Activated T-helper 1 cell treated with anti-CD3 and anti-CD28 coated beads, Interleukin-12 subunit alpha, Interleukin-12 subunit beta, Interleukin-2, Interleukin-4 antibody, amounts not matched to agents 30 ng/mL and 10 ng/mL and 1 ng/mL, durations not matched to agents 14 hours and 24 hours and 36 hours (primary cell): ENCODE measurements at regions of chr14 and their contacts with region 1.

Region 1: GRCh38 chr14:93975791-93976476 is 436 bp downstream of the ASB2 start:
- DNase-seq: peak; percentile 50
- H3K4me3 Mint-ChIP-seq: peak overlapping the region; percentile 76
- H3K27ac Mint-ChIP-seq: peak overlapping the region; percentile 99
- H3K4me1 Mint-ChIP-seq: peaks cover 96% of the 10 kb centered on the region
- H3K27me3 Mint-ChIP-seq: peaks cover 2% of the 10 kb centered on the region

Region 2: DNA sequence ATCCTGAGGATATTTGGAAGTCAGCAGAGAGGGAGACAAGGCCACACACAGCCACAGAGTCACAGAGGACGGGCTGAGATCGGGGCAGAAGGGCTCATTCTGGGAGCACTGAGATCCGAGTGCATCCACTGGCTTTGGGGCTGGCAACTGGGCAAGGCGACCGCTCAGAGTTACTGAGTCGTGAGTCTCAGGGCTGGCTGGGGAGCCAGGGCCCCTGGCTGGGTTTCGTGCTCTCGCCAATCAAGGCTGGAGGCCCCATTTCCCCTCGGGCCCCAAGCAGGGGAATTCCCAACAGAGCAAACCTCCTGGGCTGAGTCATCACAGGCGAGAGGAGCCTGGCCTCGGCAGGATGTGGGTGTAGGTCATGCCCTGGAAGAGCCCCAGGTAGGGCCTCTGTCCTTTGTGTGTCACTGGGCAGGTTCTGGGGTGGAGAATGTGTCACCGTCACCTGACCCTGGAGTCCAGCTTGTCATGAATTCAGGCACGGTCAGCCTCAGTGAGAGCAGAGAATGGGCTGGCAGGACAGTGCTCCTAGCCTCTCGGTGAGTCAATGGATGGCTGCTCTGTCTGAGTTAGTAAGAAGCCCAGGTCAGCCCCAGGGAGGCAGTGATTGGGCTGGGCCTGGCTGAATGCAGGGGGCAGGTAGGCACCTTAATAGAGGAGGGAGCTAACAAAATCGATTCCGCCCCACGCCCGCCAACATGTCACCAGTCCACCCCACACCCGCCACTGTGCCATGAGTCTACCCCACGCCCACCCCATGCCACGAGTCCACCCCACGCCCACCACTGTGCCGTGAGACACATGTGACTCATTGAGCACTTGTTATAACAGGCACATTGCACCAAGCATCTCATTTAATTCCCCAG is 16.5 kb before region 1 on chr14:
- intact Hi-C with region 1: loop called (anchors 1 kb)
- DNase-seq: peak; percentile 94
- H3K4me3 Mint-ChIP-seq: peak overlapping the region; percentile 84
- H3K27ac Mint-ChIP-seq: peak overlapping the region; percentile 100
- H3K4me1 Mint-ChIP-seq: peaks cover 97% of the 10 kb centered on the region
- H3K27me3 Mint-ChIP-seq: no peaks in the 10 kb centered on the region

Region 3: GRCh38 chr14:93989939-93990338 is 14.0 kb after region 1 on chr14:
- intact Hi-C with region 1: loop called (anchors 1 kb)
- DNase-seq: no peak
- H3K4me3 Mint-ChIP-seq: no peak overlapping the region
- H3K27ac Mint-ChIP-seq: no peak overlapping the region
- H3K4me1 Mint-ChIP-seq: peaks cover 10% of the 10 kb centered on the region
- H3K27me3 Mint-ChIP-seq: no peaks in the 10 kb centered on the region

Region 4: DNA sequence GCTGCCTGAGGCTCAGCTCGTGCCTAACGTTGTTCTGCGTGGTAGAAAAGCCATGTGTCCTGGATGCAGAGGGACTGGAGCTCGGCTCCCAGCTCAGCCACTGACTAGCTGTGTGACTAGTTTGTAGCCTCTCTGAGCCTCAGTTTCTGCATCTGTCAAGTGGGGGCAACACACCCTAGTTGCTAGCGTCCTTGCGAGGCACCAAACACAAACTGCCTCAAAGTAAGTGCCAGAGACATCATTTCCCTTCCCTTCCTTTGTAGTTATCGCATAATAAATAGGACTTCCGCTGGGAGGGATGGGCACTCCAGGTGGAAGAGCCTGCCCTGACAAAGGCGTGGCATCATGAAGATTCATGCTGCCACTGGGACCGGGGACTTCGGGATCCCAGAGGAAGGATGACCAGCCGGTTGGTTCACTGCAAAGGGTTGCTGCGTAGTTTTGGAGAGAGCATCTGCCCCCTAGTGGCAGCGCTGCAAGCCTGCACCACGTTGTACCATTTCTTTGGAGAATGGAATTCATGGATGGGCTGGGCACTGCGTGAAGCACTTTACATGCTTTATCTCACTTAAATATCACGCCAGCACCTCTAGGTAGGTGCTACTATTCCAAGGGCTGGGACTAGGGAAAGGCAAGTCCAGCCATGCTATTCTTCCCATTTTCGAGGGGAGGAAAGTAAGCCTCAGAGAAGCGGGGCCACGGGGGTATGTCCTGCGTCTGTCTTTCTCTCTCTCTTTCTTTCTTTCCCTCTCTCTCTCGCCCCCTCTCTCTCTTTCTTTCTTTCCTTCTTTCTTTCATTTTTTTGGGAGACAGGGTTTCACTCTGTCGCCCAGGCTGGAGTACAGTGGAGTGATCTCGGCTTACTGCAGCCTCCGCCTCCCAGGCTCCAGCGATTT is 25.8 kb after region 1 on chr14:
- intact Hi-C with region 1: loop called (anchors 1 kb)
- DNase-seq: peak; percentile 56
- H3K4me3 Mint-ChIP-seq: peak overlapping the region; percentile 1
- H3K27ac Mint-ChIP-seq: peak overlapping the region; percentile 36
- H3K4me1 Mint-ChIP-seq: peaks cover 39% of the 10 kb centered on the region
- H3K27me3 Mint-ChIP-seq: peaks cover 2% of the 10 kb centered on the region

Region 5: DNA sequence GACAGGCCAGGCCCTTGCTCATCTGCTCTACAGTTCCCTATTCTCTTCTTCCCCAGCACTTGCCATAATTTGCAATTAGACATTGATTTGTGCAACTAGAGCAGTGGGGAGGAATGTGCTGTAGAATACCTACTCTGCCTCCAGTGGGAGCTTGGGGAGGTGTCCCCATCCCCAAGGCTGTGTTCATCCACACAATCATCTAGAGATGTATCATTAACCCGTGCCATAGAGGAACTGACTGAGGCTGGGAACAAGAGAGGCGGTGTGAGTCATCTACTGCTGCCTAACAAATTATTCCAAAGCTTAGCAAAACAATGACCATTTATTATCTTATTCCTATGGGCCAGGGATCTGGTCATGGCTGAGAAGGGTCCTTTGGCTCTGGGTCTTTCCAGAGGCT is 45.1 kb after region 1 on chr14:
- intact Hi-C with region 1: loop called (anchors 1 kb)
- DNase-seq: no peak
- H3K4me3 Mint-ChIP-seq: peak overlapping the region; percentile 46
- H3K27ac Mint-ChIP-seq: peak overlapping the region; percentile 76
- H3K4me1 Mint-ChIP-seq: peaks cover 37% of the 10 kb centered on the region
- H3K27me3 Mint-ChIP-seq: peaks cover 8% of the 10 kb centered on the region

Region 6: GRCh38 chr14:95197552-95197950 is 1221.6 kb after region 1 on chr14:
- intact Hi-C with region 1: no loop called
- DNase-seq: no peak
- H3K4me3 Mint-ChIP-seq: no peak overlapping the region
- H3K27ac Mint-ChIP-seq: no peak overlapping the region
- H3K4me1 Mint-ChIP-seq: no peaks in the 10 kb centered on the region
- H3K27me3 Mint-ChIP-seq: peaks cover 2% of the 10 kb centered on the region